ENCODE measurements at regions of chr19 and their contacts with region 1.

Region 1: GRCh38 chr19:12722566-12723380 is 959 bp downstream of the TNPO2 start:
- DNase-seq: peak; percentile 100
- H3K4me3 Mint-ChIP-seq: peak overlapping the region; percentile 96
- H3K27ac Mint-ChIP-seq: peak overlapping the region; percentile 96
- H3K4me1 Mint-ChIP-seq: peaks cover 12% of the 10 kb centered on the region
- H3K27me3 Mint-ChIP-seq: no peaks in the 10 kb centered on the region
- CTCF ChIP-seq: no peak

Region 2: DNA sequence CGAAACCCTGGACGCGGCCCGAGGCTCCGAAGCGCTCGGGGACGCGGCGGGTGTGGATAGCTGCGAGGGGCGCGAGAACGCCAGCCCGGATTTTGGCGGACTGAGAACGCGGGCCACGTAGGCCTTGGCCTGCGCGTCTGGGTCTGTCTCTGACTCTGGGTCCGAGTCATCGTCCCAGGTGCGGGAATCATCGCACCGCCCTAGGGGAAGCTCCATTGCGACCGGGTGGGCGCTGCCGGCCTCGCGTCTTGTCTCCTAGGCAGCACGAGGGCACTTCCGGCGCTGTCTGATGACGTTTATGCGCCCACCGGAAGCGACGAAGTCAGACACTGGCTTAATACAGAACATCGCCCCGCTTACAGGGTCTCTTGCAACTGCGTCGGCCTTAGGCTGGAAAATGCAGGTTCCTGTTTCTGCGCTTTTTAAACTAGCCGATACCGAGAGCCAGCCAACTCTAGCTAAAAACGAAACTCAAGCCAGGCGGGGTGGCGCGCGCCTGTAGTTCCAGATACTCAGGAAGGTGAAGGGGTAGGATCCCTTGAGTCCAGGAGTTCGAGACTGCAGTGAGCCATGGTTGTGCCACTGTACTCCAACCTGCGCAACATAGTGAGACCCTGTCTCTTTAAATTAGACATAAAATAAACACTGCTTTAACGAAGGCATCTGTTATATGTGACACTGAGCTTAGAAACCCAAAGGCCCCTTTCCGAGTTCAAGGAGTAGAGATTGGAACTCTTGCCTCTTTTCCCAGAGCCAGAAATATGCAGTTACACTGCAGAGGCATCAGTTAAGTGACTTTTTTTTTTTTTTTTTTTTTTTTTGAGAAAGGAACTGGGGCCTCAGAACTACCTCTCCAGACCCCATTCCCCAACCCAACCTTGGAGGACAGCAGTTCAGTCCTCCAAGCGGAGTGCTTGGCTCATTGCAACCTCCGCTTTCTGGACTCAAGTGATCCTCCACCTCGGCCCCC is 26.1 kb before region 1 on chr19 and contains the start of gene FBXW9:
- CTCF ChIA-PET with region 1: interaction called, 4 read pairs
- POLR2A ChIA-PET with region 1: interaction called, 25 read pairs
- intact Hi-C with region 1: no loop called
- DNase-seq: peak; percentile 93
- H3K4me3 Mint-ChIP-seq: peak within 1 kb of the TSS; percentile 83
- H3K27ac Mint-ChIP-seq: peak within 1 kb of the TSS; percentile 75
- H3K4me1 Mint-ChIP-seq: peaks cover 5% of the 10 kb centered on the region
- H3K27me3 Mint-ChIP-seq: no peaks in the 10 kb centered on the region
- CTCF ChIP-seq: no peak
- total RNA-seq, gene FBXW9: 10.8 and 13.8 TPM in 2 replicates

Region 3: DNA sequence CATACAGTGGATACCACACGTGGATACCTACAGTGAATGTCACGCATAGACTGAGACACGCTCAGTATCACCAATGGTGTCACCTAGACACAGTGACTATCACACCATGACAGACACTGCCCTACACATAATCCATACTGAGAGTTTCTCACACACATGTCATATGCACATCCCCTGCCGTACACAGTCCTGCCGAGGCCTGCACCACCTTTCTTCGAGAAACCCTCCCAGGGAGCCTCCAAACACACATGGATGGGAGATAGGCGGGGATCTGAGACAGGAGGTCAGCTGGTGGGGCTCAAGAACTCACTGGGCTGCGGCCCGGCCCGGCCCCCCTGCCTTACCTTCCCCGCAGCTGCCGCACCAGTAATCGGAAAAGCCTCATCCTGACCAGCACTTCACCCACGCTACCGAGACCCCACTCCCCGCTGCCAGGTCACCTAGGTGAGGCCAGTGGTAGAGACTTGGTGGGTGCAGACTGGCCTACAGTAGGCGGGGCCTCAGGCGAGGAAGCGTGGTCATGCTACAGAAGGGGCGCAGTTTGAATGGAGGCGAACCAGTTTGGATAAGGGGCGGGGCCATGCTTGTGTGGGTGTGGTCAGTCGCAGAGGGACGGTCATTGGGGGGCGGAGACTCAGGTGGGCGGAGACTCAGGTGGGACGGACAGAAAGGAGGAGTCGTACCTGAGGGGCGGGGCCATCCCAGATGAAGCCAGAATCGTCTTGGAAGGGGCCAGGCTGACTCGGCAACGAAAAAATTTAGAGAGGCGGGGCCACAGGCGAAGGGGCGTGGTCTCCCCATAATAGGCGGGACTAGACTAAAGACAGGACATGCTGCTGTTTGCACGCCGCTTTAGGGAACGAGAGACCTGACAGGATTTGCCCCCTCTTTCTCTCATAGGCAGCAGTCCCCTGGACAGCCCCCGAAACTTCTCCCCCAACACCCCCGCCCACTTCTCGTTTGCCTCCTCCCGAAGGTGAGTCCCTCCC is 117.6 kb after region 1 on chr19:
- CTCF ChIA-PET with region 1: no interaction called
- POLR2A ChIA-PET with region 1: no interaction called
- intact Hi-C with region 1: no loop called
- DNase-seq: peak; percentile 89
- H3K4me3 Mint-ChIP-seq: no peak overlapping the region
- H3K27ac Mint-ChIP-seq: no peak overlapping the region
- H3K4me1 Mint-ChIP-seq: peaks cover 22% of the 10 kb centered on the region
- H3K27me3 Mint-ChIP-seq: peaks cover 14% of the 10 kb centered on the region
- CTCF ChIP-seq: no peak